ENCODE measurements at regions of chr3 and their contacts with region 1.

Region 1: DNA sequence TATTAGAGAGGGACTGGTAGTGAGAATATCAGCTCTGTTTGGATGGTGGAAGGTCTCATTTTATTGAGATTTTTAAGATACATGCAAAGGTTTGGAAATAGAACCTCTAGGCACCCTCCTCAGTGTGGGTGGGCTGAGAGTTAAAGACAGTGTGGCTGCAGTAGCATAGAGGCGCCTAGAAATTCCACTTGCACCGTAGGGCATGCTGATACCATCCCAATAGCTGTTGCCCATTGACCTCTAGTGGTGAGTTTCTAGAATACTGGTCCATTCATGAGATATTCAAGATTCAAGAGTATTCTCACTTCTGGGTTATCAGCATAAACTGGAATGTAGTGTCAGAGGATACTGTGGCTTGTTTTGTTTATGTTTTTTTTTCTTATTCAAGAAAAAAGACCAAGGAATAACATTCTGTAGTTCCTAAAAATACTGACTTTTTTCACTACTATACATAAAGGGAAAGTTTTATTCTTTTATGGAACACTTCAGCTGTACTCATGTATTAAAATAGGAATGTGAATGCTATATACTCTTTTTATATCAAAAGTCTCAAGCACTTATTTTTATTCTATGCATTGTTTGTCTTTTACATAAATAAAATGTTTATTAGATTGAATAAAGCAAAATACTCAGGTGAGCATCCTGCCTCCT is 87.2 kb downstream of the TGFBR2 start:
- DNase-seq: no peak
- ATAC-seq: peak; percentile 74

Region 2: DNA sequence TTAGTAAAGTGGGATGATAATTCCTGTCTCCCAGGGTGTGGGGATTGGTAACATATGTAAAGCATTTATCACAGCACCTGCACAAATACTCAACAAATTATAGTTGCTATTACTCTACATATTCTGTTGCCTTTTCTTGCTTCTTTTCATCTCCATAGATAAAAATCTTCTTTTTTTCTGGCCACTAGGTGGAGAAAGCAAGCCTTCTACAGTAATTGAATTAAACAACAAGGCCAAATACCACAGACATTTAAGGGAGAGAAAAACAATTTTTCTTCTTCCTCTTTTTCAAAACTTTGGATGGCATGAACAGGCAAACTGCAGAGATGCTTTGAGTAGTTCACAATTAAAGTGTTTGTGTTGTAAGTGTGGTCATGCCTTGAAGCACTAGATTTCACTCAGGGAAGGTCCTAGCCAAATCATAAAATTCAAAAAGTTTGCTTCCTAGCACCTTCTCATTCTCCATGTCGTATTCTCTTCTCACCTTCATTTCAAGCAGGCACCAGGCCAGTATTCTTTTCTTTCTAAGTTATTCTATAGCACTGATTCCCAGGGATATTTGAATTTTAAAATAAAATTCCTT is 580.6 kb before region 1 on chr3:
- intact Hi-C with region 1: loop called (anchors 5 kb)
- DNase-seq: no peak
- ATAC-seq: no peak

Region 3: DNA sequence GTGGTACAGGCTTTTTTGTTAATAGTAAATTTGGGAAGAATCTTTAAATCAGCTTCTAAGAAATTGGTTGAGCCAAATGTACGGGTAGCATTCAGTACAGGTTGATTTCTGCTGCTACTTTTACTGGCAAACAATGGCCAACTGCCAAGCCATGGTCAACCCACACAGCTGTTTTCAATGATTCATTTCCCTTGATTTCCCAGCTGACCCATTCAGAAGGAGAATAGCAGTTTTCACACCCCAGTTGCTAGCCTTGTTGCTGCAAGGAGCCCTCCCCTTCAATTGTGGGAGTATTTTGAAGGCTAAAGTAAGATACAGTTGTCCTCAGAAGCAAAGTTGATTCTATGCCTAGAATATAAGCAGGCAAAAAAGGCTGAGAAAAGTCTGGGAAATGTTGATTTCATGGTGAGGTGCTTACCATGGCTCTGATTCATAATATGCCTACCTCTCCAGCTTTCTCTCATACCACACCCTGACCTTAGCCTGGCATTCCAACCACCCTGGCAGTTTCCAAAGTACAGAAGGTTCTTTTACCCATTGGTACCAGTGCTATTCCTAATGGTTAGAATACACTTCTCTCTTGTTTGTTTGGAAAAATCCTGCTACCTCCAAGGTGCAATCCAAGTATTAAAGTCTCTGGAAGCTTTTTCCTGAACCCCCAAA is 407.5 kb before region 1 on chr3:
- intact Hi-C with region 1: loop called (anchors 5 kb)
- DNase-seq: peak; percentile 70
- ATAC-seq: peak; percentile 95

Region 4: DNA sequence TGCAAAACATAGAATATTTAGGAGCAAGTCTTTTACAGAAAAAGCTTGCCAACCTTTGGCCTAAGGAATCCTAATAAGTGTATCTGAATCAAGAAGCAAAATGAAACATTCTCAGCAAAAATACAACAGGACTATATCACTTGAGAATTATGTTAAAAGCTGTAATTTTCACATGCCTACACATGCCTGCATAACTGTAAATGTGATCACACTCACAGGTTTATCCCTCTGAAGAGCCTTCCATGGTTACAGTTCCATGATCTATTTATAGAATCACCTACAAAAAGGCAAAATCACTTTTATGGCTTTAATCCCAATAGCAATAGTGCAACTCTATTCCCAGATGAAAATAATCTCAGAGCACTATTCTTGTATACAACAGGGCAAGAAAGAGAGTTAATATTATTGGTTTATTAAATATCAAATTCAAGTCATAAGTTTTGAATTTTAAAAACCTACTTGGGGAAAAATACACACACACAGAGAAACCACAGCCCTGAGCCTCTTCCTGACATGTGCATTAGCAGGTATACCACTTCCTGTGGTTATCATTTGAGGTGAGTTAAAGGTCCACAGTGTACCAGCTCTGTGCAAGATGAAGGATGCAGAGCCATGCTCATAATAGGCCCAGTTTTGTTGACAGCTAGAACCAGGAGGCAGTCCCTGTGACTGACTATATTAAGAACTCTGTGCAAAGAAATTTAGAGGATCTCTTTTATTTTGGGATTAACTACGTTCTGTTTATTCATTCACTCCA is 339.7 kb before region 1 on chr3:
- intact Hi-C with region 1: loop called (anchors 5 kb)
- DNase-seq: no peak
- ATAC-seq: peak; percentile 52

Region 5: GRCh38 chr3:30440147-30440604 is 253.4 kb before region 1 on chr3:
- intact Hi-C with region 1: loop called (anchors 5 kb)
- DNase-seq: no peak
- ATAC-seq: no peak

Region 6: DNA sequence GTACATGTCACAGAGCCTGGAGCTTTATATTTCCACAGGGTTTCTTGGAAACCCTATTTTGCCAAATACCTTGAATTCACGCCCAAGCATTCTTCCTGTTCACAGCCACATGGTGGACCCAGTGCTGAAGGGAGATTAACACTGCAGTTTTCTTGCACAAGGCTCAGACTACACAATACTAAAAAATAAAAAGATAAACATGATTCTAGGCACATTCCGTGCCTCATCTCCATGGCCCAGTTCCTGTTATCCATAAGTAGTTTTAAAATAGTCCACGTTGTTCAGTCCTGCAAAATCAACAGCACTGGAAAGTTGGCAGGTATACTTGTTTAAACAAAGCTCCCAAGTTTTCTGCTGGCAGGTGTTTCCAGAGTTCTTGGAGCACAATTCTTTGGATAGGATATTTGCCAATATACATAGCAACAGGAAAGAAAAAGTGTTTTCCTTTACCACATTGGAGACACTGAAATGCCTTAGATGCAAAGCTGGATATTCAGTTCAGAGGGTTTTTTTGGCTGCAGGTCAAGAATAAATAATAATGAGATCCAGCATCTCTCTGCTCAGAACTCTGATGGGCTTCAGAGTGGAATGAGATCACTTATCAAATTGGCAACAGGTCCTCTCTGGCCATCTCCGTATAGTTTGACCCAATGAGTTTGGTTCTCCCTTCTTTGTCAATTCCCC is 175.3 kb before region 1 on chr3:
- intact Hi-C with region 1: loop called (anchors 2 kb)
- DNase-seq: no peak
- ATAC-seq: peak; percentile 93

Region 7: GRCh38 chr3:30649572-30650318 is 43.9 kb before region 1 on chr3:
- intact Hi-C with region 1: loop called (anchors 5 kb)
- DNase-seq: no peak
- ATAC-seq: peak; percentile 56

Measured in Right ventricle myocardium inferior (tissue), 1 donor.